Activated CD4-positive, alpha-beta T cell treated with anti-CD3 and anti-CD28 coated beads, Interleukin-2, amount 10 ng/mL, durations not matched to agents 24 days and 14 days (primary cell): ENCODE measurements at regions of chr13 and their contacts with region 1.

Region 1: DNA sequence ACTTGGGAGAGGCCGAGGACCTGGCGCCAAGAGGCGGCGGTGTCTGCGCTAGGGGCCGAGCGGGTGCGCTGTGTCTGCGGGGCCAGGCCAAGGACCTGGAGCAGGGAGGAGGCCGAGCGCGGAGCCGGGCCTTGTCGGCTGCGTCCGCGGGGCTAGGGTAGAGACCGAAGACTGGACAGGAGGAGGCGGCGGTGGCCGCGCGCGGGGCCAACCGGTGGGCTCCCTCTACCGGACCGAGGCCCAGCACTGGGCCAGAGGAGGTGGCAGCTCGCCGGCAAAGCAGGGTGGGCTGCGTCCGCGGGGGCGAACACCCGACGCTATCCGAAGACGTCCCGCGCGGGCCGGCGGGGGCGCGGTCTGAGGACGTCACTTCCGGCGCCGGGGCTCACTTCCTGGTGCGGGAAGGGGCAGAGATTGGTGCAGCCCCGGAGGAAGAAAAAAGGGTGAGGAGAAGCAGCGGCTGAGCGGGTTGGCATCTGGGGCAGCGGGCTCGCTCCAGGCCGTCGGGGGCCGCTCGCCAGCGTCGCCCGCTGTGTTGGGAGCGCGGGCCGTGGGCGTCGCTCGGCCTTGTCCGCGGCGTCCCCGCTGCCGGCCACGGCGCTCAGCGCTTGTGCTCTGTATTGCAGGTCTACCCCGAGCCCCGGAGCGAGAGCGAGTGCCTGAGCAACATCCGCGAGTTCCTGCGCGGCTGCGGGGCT is 38.3 kb downstream of the ARHGEF7 start:
- DNase-seq: peak; percentile 99
- H3K4me3 Mint-ChIP-seq: peak overlapping the region; percentile 90
- H3K27ac Mint-ChIP-seq: peak overlapping the region; percentile 97
- H3K4me1 Mint-ChIP-seq: peaks cover 22% of the 10 kb centered on the region
- H3K27me3 Mint-ChIP-seq: peaks cover 29% of the 10 kb centered on the region

Region 2: GRCh38 chr13:110715395-110716235 is 437.8 kb before region 1 on chr13:
- intact Hi-C with region 1: loop called (anchors 10 kb)
- DNase-seq: peak; percentile 98
- H3K4me3 Mint-ChIP-seq: peak overlapping the region; percentile 96
- H3K27ac Mint-ChIP-seq: peak overlapping the region; percentile 95
- H3K4me1 Mint-ChIP-seq: peaks cover 29% of the 10 kb centered on the region
- H3K27me3 Mint-ChIP-seq: peaks cover 2% of the 10 kb centered on the region

Region 3: GRCh38 chr13:111017755-111018459 is 135.5 kb before region 1 on chr13:
- intact Hi-C with region 1: no loop called
- DNase-seq: no peak
- H3K4me3 Mint-ChIP-seq: no peak overlapping the region
- H3K27ac Mint-ChIP-seq: no peak overlapping the region
- H3K4me1 Mint-ChIP-seq: peaks cover 7% of the 10 kb centered on the region
- H3K27me3 Mint-ChIP-seq: peaks cover 2% of the 10 kb centered on the region

Region 4: GRCh38 chr13:111184458-111185401 is 31.3 kb after region 1 on chr13:
- intact Hi-C with region 1: loop called (anchors 2 kb)
- DNase-seq: peak; percentile 81
- H3K4me3 Mint-ChIP-seq: peak overlapping the region; percentile 82
- H3K27ac Mint-ChIP-seq: peak overlapping the region; percentile 94
- H3K4me1 Mint-ChIP-seq: peaks cover 87% of the 10 kb centered on the region
- H3K27me3 Mint-ChIP-seq: no peaks in the 10 kb centered on the region

Region 5: DNA sequence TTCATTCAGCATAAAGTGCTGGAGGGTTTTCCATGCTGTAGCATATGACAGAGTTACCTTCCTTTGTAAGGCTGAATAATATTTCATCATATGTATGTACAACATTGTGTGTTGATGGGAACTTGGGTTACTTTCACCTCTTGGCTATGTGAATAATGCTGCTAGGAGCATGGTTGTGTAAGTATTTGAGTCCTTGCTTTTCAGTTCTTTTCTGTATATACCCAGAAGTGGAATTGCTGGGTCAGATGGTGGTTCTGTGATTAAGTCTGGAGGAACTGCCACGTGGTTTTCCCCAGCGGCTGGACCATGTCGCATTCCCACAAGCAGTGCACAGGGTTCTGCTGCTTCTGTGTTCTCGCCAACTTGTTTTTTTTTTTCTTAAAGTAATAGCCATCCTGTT is 65.9 kb after region 1 on chr13:
- intact Hi-C with region 1: loop called (anchors 2 kb)
- DNase-seq: no peak
- H3K4me3 Mint-ChIP-seq: no peak overlapping the region
- H3K27ac Mint-ChIP-seq: no peak overlapping the region
- H3K4me1 Mint-ChIP-seq: peaks cover 14% of the 10 kb centered on the region
- H3K27me3 Mint-ChIP-seq: no peaks in the 10 kb centered on the region

Region 6: GRCh38 chr13:111572956-111573761 is 419.7 kb after region 1 on chr13:
- intact Hi-C with region 1: no loop called
- DNase-seq: no peak
- H3K4me3 Mint-ChIP-seq: no peak overlapping the region
- H3K27ac Mint-ChIP-seq: no peak overlapping the region
- H3K4me1 Mint-ChIP-seq: no peaks in the 10 kb centered on the region
- H3K27me3 Mint-ChIP-seq: no peaks in the 10 kb centered on the region

Region 7: DNA sequence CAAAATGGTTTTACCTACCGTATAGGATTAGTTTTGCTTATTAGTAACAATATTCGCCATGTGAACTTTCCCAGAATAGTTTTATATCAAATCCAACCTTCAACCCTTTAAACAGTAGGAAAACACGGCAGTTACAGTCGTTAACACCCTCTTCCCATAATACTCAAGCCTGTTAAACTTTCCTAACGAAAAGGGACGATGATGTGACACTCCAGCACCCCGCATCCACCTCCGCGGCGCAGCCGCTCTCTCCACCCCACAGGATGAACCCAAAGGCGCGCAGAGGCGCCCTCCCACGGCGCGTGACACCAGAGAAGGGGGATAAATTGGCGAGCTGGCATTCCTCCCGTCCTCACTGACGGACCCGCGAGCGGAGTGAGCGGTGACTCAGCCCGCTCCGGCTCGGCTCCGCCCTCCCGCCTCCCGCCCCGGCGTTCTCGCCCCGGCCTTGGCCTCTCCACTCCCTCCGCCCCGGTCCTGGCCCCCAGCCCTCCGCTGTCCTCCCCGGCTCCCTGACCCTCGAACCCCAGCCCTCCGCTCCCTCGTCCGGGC is 1433.9 kb after region 1 on chr13:
- intact Hi-C with region 1: loop called (anchors 10 kb)
- DNase-seq: peak; percentile 90
- H3K4me3 Mint-ChIP-seq: peak overlapping the region; percentile 98
- H3K27ac Mint-ChIP-seq: peak overlapping the region; percentile 96
- H3K4me1 Mint-ChIP-seq: peaks cover 32% of the 10 kb centered on the region
- H3K27me3 Mint-ChIP-seq: no peaks in the 10 kb centered on the region